Lower leg skin (tissue), 4 donors: ENCODE measurements at regions of chr10 and their contacts with region 1.

Region 1: GRCh38 chr10:3197348-3198003 is 24.9 kb upstream of the PITRM1 start:
- DNase-seq: peak; percentile 71 to 96
- H3K4me3 ChIP-seq: no peak overlapping the region
- CTCF ChIP-seq: peak in 1 of 3 donors; percentile 64
- POLR2A ChIP-seq: no peak

Region 2: DNA sequence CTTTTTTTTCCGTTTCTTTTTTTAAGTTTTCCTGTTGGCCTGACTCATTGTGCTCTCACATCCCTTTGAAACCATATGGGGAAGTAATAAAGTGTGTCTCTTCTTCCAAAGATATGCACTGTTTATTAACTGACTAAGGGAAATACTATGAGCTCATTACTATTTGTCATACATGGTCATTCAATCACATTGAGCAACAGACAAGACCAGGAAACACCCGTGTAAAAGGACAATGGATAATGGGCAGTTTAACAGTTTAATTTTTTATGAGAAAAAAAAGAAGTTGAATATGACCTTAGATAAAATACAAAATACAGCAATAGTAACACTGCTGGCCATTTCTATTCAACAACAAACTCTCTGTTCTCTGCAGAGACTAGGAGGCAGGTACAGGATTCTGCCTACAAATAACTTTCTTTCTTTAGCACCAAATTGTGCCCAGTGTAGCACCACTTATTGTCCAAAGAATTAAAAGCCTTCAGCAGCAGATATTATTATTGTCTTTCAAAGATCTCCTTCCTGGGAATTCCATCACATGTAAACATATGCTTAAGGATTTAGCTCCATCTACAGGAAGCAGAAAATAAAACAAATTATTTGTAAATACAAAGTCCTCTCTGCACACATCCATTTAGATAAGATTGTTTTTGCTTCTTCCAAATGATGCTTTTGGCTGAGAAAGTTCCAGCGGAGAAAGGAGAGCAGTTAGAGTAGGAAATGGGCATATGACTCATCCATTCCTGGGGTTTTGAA is 1573.5 kb after region 1 on chr10:
- intact Hi-C with region 1: loop called (anchors 10 kb)
- DNase-seq: no peak
- H3K4me3 ChIP-seq: no peak overlapping the region
- CTCF ChIP-seq: no peak
- POLR2A ChIP-seq: no peak